Panc1 (cell line): ENCODE measurements at regions of chr3 and their contacts with region 1.

Region 1: DNA sequence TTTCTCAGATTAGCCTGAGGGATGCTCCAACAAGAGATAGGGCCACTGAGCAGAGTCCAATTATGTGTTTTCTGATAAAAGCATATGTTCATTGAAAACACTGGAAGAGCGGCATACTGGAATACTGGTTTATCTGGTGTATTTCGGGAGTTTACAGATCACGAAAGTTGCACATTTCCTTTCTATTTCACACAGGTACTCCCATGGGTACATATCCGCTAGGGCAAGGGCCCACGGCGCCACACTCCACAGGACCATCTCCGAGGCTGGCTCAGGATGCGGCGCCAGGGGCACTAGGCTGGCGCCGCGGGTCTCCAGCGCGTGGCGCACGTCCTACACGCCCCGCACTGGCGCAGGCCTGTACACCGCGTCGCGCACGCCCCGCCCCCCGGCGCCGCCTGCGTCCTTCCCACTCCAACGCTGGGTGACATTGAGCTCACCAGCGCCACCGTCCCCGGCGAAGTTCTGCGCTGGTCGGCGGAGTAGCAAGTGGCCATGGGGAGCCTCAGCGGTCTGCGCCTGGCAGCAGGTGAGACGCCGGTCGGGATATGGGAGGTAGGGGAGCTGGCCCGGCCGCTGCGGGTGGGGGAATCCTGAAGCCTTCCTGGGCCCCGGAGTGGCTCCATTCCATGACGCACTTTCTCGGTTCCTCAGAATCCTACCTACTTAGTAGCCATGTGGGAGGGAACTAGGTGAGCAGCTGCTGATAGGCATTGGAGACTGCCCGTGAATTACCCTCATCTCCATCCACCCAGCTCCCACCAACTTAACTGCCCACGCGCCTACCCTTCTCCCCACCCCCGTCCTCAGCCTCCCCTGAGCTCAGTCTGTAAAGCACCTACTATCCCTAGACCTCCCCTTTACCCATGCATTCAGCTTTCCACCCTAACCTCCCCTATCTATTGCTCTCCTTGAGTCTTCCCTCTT is at the start of gene FAM162A:
- DNase-seq: peak; percentile 74
- ATAC-seq: peak; percentile 99
- H3K4me3 ChIP-seq: peak within 1 kb of the TSS; percentile 66 to 93
- H3K27ac ChIP-seq: peak within 1 kb of the TSS; percentile 94
- H3K4me1 ChIP-seq: peaks cover 5% of the 10 kb centered on the region; the same call in 1 of the 2 replicates
- H3K27me3 ChIP-seq: no peaks in the 10 kb centered on the region
- CTCF ChIP-seq: peak; percentile 95
- total RNA-seq, gene FAM162A: 59.6 TPM

Region 2: DNA sequence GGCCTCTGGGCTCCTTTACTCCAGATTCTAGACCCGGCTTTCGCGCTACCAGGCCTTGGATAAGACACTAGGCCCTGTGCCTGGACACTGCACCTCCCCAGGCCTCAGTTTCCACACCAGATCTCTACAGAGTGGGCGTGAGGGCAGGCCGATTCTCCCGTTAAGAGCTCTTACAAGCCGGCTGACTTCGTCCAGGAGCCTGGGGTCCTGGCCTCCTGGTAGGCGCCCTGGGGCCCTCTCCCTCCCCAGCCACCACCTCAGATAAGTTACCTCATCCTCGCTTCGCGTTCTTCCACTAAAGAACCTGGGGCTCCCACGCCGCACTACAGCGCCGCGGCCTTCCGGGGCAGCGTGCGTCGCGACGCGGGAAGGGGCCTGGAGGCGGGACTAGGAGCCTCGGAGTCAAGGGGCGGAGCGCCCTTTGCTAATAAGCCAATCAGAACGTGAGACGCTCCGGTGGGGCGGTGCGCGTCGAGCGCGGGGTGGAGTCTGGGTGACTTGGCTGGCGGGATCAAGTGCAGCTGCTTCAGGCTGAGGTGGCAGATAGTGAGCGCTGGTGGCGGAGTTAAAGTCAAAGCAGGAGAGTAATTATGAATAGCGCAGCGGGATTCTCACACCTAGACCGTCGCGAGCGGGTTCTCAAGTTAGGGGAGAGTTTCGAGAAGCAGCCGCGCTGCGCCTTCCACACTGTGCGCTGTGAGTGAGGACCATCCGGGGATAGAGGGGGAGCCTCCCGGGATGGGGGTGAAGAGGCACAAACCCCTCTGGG is 549.2 kb before region 1 on chr3 and contains the starts of genes EAF2 and IQCB1:
- CTCF ChIA-PET with region 1: no interaction called
- POLR2A ChIA-PET with region 1: no interaction called
- in situ Hi-C with region 1: no loop called
- intact Hi-C with region 1: loop called (anchors 10 kb)
- DNase-seq: peak; percentile 87
- ATAC-seq: peak; percentile 100
- H3K4me3 ChIP-seq: peak within 1 kb of the TSS; percentile 75 to 92
- H3K27ac ChIP-seq: peak within 1 kb of the TSS; percentile 98
- H3K4me1 ChIP-seq: peaks cover 10% of the 10 kb centered on the region
- H3K27me3 ChIP-seq: no peaks in the 10 kb centered on the region
- CTCF ChIP-seq: no peak; the same call in 1 of the 2 replicates
- total RNA-seq, gene EAF2: 5.3 TPM
- total RNA-seq, gene IQCB1: 20.1 TPM

Region 3: DNA sequence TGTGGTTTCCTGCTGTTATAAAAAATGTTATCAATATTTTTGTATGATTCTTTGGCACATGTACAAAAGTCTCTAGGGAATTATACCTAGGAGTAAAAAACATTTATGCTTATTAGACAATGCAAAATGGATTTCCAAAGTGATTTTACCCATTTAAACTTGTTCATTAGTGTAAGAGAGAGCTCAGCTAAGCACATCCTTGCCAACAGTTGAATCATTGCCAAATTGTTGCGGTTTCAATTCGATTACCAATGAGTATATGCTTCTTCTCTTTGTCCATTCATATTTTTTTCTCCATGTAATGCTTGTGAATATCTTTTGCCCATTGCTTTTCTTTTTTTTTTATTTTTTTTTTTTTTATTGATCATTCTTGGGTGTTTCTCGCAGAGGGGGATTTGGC is 183.4 kb before region 1 on chr3:
- CTCF ChIA-PET with region 1: no interaction called
- POLR2A ChIA-PET with region 1: no interaction called
- in situ Hi-C with region 1: no loop called
- intact Hi-C with region 1: no loop called
- DNase-seq: no peak
- ATAC-seq: no peak
- H3K4me3 ChIP-seq: no peak overlapping the region
- H3K27ac ChIP-seq: no peak overlapping the region
- H3K4me1 ChIP-seq: no peaks in the 10 kb centered on the region
- H3K27me3 ChIP-seq: peaks cover 4% of the 10 kb centered on the region; the same call in 1 of the 2 replicates
- CTCF ChIP-seq: no peak

Region 4: GRCh38 chr3:122305818-122306621 is 78.0 kb before region 1 on chr3:
- CTCF ChIA-PET with region 1: interaction called, 10 read pairs
- POLR2A ChIA-PET with region 1: no interaction called
- in situ Hi-C with region 1: no loop called
- intact Hi-C with region 1: no loop called
- DNase-seq: peak; percentile 15
- ATAC-seq: peak; percentile 95
- H3K4me3 ChIP-seq: no peak overlapping the region; a peak in 1 of 4 replicates
- H3K27ac ChIP-seq: no peak overlapping the region
- H3K4me1 ChIP-seq: peaks cover 3% of the 10 kb centered on the region; the same call in 1 of the 2 replicates
- H3K27me3 ChIP-seq: no peaks in the 10 kb centered on the region; the same call in 1 of the 2 replicates
- CTCF ChIP-seq: peak; percentile 61

Region 5: DNA sequence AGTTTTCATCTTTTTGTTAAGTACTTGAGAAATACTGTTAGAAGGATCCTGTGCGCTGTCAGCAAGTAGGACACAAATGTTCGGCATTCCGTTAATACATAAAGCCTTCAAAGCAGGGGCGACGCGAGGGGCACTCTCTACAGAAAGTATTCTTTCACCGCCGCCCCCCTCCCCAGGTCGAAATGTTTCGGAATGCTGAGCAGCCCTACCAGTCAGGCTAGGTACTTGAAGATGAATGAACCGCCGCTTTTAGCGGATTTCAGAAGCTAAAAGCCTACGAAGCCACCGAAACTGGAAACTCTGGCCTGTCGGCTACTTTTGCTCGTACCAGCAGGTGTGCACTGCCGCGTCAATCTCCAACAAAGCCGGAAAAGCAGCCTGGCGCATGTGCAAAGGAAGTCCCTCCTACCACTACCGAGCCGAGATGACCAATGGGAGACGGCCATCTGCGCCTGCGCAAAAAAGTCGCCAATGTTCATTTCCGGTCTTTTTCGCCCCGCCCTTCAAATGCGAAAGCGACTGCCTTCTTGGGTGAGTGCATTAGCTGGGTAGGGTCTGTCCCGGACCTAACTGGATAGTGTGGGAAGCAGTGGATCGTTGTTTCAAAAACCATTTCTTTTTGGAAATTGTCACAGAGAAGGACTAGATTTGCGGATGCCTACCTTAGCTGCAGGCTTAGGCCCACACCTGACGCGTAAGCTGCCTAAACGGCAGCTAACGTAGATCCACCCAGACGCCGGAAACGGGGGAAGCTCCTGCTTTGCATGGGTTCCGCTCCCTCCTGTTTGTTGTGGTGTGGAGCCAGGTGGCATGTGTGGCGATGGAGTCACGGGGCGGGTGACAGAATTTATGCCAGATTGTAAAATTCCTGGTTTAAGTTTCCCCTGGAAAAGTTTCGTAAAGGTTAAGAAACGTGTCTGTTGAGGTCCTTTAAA is 32.0 kb after region 1 on chr3 and contains the start of gene WDR5B:
- CTCF ChIA-PET with region 1: interaction called, 5 read pairs
- POLR2A ChIA-PET with region 1: interaction called, 5 read pairs
- in situ Hi-C with region 1: no loop called
- intact Hi-C with region 1: loop called (anchors 1 kb)
- DNase-seq: peak; percentile 97
- ATAC-seq: peak; percentile 96
- H3K4me3 ChIP-seq: peak within 1 kb of the TSS; percentile 68 to 87
- H3K27ac ChIP-seq: peak within 1 kb of the TSS; percentile 99
- H3K4me1 ChIP-seq: peaks cover 17% of the 10 kb centered on the region
- H3K27me3 ChIP-seq: no peaks in the 10 kb centered on the region
- CTCF ChIP-seq: no peak
- total RNA-seq, gene WDR5B: 5.5 TPM

Region 6: DNA sequence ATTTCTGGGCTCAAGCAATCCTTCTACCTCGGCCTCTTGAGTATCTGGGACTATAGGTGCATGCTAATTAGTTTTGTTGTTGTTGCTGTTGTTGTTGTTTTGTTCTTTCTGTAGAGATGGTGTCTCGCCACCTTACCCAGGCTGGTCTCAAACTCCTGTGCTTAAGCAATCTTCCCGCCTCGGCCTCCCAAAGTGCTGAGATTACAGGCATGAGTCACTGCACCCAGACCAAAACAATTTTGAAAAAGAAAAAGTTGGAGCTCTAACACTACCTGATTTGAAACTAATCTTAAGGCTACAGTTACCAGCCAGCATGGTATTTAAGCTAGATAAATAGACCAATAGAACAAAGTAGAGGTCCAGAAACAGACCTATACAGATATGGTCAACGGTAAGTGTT is 101.0 kb after region 1 on chr3:
- CTCF ChIA-PET with region 1: no interaction called
- POLR2A ChIA-PET with region 1: no interaction called
- in situ Hi-C with region 1: no loop called
- intact Hi-C with region 1: no loop called
- DNase-seq: no peak
- ATAC-seq: no peak
- H3K4me3 ChIP-seq: no peak overlapping the region
- H3K27ac ChIP-seq: no peak overlapping the region
- H3K4me1 ChIP-seq: peaks cover 15% of the 10 kb centered on the region; the same call in 1 of the 2 replicates
- H3K27me3 ChIP-seq: no peaks in the 10 kb centered on the region
- CTCF ChIP-seq: no peak